Dorsolateral prefrontal cortex (tissue), 120 donors: ENCODE measurements at regions of chr12 and their contacts with region 1.

Region 1: GRCh38 chr12:13941258-13942249 is 39.8 kb downstream of the GRIN2B start:
- DNase-seq: peak in 1 of 10 donors; percentile 42
- H3K4me3 ChIP-seq: no peak overlapping the region
- H3K27ac ChIP-seq: no peak overlapping the region
- H3K27me3 ChIP-seq: peaks cover 0 to 6% (median 0%) of the 10 kb centered on the region in 45 donors
- CTCF ChIP-seq: peak in 51 of 56 donors; percentile 12 to 67 (median 46)

Region 2: DNA sequence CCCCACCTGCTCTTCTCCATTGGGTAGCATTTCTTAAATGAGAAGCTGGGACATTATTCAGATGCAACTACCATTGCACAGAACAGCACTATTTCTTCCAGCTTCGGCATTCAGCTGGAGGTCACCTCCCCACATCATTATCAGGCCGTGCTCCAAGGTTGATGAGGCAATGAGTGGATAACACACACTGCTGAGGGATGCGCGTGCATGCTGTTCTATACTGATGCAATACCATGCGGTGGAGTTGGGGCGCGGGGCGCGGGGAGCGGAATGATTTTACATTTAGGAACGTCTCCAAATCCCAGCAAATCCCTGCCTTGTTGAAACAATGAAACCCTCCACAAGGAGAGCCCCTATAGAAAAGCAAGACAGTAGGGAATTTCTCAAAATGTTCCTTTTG is 243.6 kb before region 1 on chr12:
- intact Hi-C with region 1: no loop called
- DNase-seq: no peak
- H3K4me3 ChIP-seq: no peak overlapping the region
- H3K27ac ChIP-seq: no peak overlapping the region
- H3K27me3 ChIP-seq: peaks cover 0 to 6% (median 0%) of the 10 kb centered on the region in 45 donors
- CTCF ChIP-seq: no peak

Region 3: DNA sequence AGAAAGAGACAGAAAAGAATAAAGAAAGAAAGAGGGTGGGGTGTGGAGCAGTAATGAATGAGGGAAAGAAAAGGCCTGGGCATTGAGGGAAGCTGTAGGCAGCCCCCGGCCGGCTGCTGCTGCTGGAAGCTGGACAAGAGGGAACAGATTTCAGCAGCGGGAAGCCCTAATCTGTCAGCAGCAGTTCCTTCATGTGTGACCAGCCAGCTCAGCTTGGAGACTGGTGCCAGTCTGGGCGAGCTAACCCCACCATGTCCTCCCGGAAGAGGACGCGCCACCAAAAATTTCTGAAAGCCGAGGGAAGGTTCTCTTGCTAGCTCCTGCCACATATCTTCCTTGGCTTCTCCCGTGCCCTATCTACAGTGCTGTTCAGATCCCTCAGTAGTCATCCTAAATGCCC is 197.0 kb before region 1 on chr12:
- intact Hi-C with region 1: loop called in 1 of 2 experiments (anchors 5 kb)
- DNase-seq: peak in 5 of 10 donors; percentile 10 to 71 (median 40)
- H3K4me3 ChIP-seq: peak overlapping the region in 24 of 59 donors; percentile 2 to 40 (median 18)
- H3K27ac ChIP-seq: peak overlapping the region in 28 of 59 donors; percentile 9 to 76 (median 46)
- H3K27me3 ChIP-seq: peaks cover 0 to 27% (median 0%) of the 10 kb centered on the region in 45 donors
- CTCF ChIP-seq: no peak

Region 4: DNA sequence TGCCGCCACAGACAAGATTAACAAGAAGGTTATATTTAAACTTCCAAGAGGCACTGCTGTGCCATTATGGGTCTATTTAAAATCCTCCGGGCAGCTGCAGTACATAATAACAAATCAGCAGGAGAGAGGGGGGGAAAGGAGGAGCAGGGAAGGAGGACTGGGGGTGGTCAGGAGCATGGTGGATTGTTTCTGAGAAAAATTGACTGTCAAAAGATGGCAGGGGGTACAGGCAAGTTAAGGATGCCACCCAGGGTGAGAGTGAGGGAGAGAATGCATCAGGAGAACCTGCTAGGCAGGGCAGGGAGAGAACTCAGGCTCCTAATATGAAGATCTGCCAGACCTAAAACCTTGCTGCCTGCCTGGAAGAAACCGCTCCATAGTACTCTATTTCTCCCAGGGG is 142.0 kb before region 1 on chr12:
- intact Hi-C with region 1: no loop called
- DNase-seq: no peak
- H3K4me3 ChIP-seq: no peak overlapping the region
- H3K27ac ChIP-seq: peak overlapping the region in 13 of 59 donors; percentile 9 to 53 (median 38)
- H3K27me3 ChIP-seq: peaks cover 0 to 5% (median 0%) of the 10 kb centered on the region in 45 donors
- CTCF ChIP-seq: no peak

Region 5: DNA sequence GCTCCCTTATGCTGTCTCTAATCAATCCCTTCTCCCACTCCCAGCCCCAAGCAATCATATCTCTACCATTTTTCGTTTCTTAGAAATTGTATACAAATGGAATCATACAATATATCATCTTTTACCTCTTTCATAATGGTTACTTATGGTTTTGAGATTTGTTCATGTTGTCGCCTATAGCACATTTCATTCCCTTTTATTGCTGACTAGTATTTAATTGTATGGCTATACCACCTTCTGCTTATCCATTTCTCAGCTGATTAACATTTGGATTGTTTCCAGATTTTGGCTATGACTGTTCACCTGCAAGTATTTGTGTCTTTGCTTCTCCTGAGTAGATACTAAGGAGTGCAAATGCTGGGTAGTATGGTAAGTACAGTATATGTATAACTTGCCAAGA is 76.5 kb after region 1 on chr12:
- intact Hi-C with region 1: no loop called
- DNase-seq: no peak
- H3K4me3 ChIP-seq: no peak overlapping the region
- H3K27ac ChIP-seq: no peak overlapping the region
- H3K27me3 ChIP-seq: no peaks in the 10 kb centered on the region
- CTCF ChIP-seq: no peak

Region 6: GRCh38 chr12:14601692-14602478 is 660.3 kb after region 1 on chr12:
- intact Hi-C with region 1: no loop called
- DNase-seq: no peak
- H3K4me3 ChIP-seq: no peak overlapping the region
- H3K27ac ChIP-seq: no peak overlapping the region
- H3K27me3 ChIP-seq: no peaks in the 10 kb centered on the region
- CTCF ChIP-seq: no peak